Posterior cingulate gyrus (tissue), 11 donors: ENCODE measurements at regions of chr11 and their contacts with region 1.

Region 1: GRCh38 chr11:13462901-13463778 is at the start of gene BTBD10:
- DNase-seq: peak; percentile 76 to 99 (median 88)

Region 2: GRCh38 chr11:13183094-13183825 is 279.9 kb before region 1 on chr11:
- intact Hi-C with region 1: loop called (anchors 10 kb)
- DNase-seq: peak in 2 of 10 donors; percentile 19 to 51

Region 3: DNA sequence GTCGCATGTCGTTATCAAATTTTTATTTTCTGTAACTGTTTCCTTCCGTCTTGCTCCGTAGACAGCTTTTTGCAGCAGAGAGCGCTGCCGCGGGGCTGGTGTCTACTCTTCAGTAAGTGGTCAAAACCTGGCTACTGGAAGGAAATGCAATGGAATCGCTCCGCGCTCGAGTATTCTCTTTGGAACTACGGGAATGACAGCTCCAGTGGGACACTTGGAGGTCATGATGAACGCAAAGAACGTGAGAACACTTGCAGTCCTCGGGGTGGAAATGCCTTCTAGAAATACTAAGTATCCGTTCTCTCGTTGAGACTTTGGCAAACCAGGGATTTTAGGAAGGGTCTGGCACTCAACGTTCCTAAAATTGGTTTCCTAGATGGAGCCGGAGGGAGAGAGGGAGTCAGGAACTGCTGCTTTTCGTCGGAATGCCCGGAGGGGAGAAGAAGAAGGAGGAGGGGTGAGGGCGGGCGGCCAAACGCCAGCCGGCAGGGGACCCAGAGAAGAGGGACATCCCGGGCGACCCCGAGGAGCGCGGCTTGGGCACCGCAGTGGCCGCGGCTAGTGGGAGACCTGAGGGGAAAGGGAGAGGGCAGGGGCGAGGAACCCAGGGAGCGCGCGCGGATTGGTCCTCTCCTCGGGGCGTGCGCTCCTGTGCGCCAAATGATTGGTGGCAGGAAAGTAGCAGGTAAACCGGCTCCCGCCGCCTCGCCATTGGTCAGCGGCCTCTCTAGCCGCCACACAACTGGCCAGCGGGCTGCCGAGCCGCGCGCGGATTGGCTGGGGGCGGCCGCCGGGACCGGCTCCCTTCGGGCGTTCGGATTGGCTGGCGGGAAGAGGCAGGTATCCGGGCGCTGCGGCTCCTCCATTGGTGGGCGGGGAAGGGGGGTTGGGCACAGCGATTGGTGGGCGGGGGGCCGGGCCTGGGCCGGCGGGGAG is 186.0 kb before region 1 on chr11:
- intact Hi-C with region 1: loop called (anchors 5 kb)
- DNase-seq: peak; percentile 89 to 100 (median 96)